CD8-positive, alpha-beta T cell (primary cell): ENCODE measurements at regions of chr21 and their contacts with region 1.

Region 1: DNA sequence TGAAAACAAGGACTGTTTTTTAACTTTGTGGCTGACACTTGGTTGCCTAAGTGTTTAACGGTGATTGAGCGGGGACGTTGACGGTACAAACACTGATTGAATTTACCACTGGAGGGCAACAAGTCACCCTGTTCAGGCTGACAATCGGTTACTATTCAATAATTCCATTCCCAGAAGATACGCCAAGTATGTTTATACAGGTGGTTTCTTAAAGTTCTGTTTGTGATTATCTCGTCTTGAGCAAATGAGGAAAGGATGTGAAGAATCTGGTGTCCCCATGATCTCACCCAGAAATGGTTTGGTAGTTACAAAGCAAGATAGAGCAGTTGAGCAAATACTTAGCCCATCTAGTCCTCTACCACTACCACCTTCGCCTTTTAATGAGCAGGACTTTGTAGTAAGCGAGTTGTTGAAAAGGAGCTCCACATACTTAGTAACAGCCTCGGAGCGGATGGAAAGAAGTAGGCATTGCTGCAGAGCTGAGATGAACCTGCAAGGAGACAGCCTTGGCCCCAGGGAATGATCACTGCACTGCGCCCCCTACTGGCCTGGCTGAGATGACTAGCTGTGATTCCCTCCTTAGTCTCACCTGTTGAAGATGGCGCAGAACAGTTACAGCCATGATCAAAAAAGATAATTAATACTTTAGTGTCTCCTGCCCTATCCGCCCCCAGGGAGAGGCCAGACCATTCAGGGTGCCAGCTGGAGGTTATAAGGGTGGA is 36.3 kb downstream of the IFNAR1 start:
- DNase-seq: peak; percentile 76 to 94 (median 85)
- ATAC-seq: peak; percentile 69
- H3K4me3 ChIP-seq: peak overlapping the region; percentile 50 to 61
- H3K4me3 Mint-ChIP-seq: peak overlapping the region; percentile 84
- H3K27ac ChIP-seq: peak overlapping the region; percentile 61 to 71
- H3K27ac Mint-ChIP-seq: peak overlapping the region; percentile 91
- H3K4me1 ChIP-seq: peaks cover 15% of the 10 kb centered on the region
- H3K4me1 Mint-ChIP-seq: peaks cover 19% of the 10 kb centered on the region
- H3K27me3 ChIP-seq: peaks cover 0 to 3% of the 10 kb centered on the region in 2 experiments
- H3K27me3 Mint-ChIP-seq: no peaks in the 10 kb centered on the region
- CTCF ChIP-seq: peak; percentile 93

Region 2: DNA sequence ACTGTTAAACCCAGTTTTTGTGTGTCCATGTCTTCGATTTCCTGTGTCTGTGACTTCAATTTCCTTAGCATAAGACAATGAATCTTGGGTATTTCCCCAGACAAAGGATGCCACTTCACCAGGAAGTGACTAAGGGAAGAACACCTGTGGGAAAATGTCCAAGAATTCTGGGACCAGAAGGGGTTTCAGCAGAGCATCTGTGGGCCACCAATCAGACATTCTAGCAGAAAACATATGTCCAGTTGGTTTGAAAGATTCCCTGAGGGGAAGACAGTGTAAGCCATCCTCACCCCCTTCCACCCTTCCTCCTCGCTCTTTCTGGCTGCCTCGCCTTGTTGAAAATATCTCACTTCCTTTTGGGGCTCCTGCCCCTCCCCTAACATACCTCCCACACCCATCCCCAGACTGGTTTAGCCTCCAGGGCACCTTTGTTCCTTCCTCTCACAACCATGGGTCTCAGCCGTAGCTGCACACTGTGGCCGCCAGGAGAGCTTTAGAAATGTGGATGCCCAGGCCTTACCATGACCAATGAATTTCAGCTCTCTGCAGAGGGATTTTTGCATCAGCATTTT is 61.8 kb before region 1 on chr21:
- CTCF ChIA-PET with region 1: interaction called, 10 read pairs
- POLR2A ChIA-PET with region 1: interaction called, 11 read pairs
- intact Hi-C with region 1: no loop called
- DNase-seq: peak in 7 of 9 experiments; percentile 9 to 68 (median 31)
- ATAC-seq: peak; percentile 93
- H3K4me3 ChIP-seq: peak overlapping the region in 1 of 2 experiments; percentile 24
- H3K4me3 Mint-ChIP-seq: peak overlapping the region; percentile 72
- H3K27ac ChIP-seq: peak overlapping the region; percentile 4 to 58
- H3K27ac Mint-ChIP-seq: peak overlapping the region; percentile 80
- H3K4me1 ChIP-seq: peaks cover 36% of the 10 kb centered on the region
- H3K4me1 Mint-ChIP-seq: peaks cover 44% of the 10 kb centered on the region
- H3K27me3 ChIP-seq: no peaks in the 10 kb centered on the region
- H3K27me3 Mint-ChIP-seq: no peaks in the 10 kb centered on the region
- CTCF ChIP-seq: peak; percentile 29

Region 3: DNA sequence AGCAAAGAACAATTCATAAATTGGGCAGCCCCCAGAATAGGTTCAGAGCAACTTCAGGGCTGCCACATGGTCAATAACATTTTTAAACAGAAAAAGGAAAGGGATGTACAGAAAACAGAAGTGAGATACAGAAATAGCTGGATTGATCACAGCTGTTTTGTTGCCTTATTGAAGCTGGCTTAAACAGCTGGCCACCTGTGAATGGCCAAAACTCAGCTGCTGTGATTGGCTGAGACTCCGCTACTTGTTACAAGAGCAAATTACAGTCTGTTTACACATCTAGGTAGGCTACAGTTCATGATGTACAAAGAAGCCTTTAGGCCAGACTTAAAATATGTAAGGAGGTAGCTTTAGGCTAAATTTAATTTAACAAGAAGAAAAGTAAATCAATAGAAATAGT is 47.9 kb before region 1 on chr21:
- CTCF ChIA-PET with region 1: no interaction called
- POLR2A ChIA-PET with region 1: no interaction called
- intact Hi-C with region 1: no loop called
- DNase-seq: no peak
- ATAC-seq: no peak
- H3K4me3 ChIP-seq: no peak overlapping the region
- H3K4me3 Mint-ChIP-seq: no peak overlapping the region
- H3K27ac ChIP-seq: no peak overlapping the region
- H3K27ac Mint-ChIP-seq: no peak overlapping the region
- H3K4me1 ChIP-seq: peaks cover 9% of the 10 kb centered on the region
- H3K4me1 Mint-ChIP-seq: peaks cover 10% of the 10 kb centered on the region
- H3K27me3 ChIP-seq: no peaks in the 10 kb centered on the region
- H3K27me3 Mint-ChIP-seq: no peaks in the 10 kb centered on the region
- CTCF ChIP-seq: no peak

Region 4: DNA sequence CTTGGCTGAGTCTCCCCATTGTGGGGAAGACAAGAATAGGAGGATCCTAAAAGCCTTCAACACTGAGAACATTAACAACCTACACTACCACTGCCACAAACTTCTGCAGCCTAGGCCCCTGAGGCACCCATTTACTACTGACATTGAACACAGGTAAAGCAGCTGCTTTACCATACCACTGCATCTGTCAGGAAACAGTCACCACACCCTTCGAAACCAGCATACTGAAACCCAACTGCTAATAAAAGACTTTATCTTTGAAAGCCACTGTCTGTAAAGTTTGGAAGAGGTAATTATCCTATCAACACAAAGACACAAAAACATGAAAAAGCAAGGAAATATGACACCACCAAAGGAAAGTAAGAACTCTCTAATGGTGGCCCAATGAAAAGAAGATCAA is 28.9 kb before region 1 on chr21:
- CTCF ChIA-PET with region 1: interaction called, 15 read pairs
- POLR2A ChIA-PET with region 1: interaction called, 13 read pairs
- intact Hi-C with region 1: no loop called
- DNase-seq: no peak
- ATAC-seq: no peak
- H3K4me3 ChIP-seq: no peak overlapping the region
- H3K4me3 Mint-ChIP-seq: no peak overlapping the region
- H3K27ac ChIP-seq: no peak overlapping the region
- H3K27ac Mint-ChIP-seq: peak overlapping the region; percentile 69
- H3K4me1 ChIP-seq: peaks cover 42% of the 10 kb centered on the region
- H3K4me1 Mint-ChIP-seq: peaks cover 63% of the 10 kb centered on the region
- H3K27me3 ChIP-seq: no peaks in the 10 kb centered on the region
- H3K27me3 Mint-ChIP-seq: no peaks in the 10 kb centered on the region
- CTCF ChIP-seq: no peak

Region 5: GRCh38 chr21:33374450-33375096 is 13.5 kb after region 1 on chr21:
- CTCF ChIA-PET with region 1: interaction called, 22 read pairs
- POLR2A ChIA-PET with region 1: interaction called, 14 read pairs
- intact Hi-C with region 1: no loop called
- DNase-seq: peak in 7 of 9 experiments; percentile 38 to 75 (median 67)
- ATAC-seq: peak; percentile 85
- H3K4me3 ChIP-seq: no peak overlapping the region
- H3K4me3 Mint-ChIP-seq: no peak overlapping the region
- H3K27ac ChIP-seq: no peak overlapping the region
- H3K27ac Mint-ChIP-seq: no peak overlapping the region
- H3K4me1 ChIP-seq: peaks cover 9% of the 10 kb centered on the region
- H3K4me1 Mint-ChIP-seq: peaks cover 12% of the 10 kb centered on the region
- H3K27me3 ChIP-seq: peaks cover 0 to 13% of the 10 kb centered on the region in 2 experiments
- H3K27me3 Mint-ChIP-seq: peaks cover 3% of the 10 kb centered on the region
- CTCF ChIP-seq: peak; percentile 66

Region 6: GRCh38 chr21:33386222-33386784 is 25.3 kb after region 1 on chr21:
- CTCF ChIA-PET with region 1: interaction called, 16 read pairs
- POLR2A ChIA-PET with region 1: interaction called, 17 read pairs
- intact Hi-C with region 1: loop called (anchors 1 to 2 kb)
- DNase-seq: peak in 1 of 9 experiments; percentile 19
- ATAC-seq: no peak
- H3K4me3 ChIP-seq: no peak overlapping the region
- H3K4me3 Mint-ChIP-seq: no peak overlapping the region
- H3K27ac ChIP-seq: no peak overlapping the region
- H3K27ac Mint-ChIP-seq: no peak overlapping the region
- H3K4me1 ChIP-seq: peaks cover 42% of the 10 kb centered on the region
- H3K4me1 Mint-ChIP-seq: peaks cover 46% of the 10 kb centered on the region
- H3K27me3 ChIP-seq: peaks cover 0 to 33% of the 10 kb centered on the region in 2 experiments
- H3K27me3 Mint-ChIP-seq: peaks cover 3% of the 10 kb centered on the region
- CTCF ChIP-seq: no peak

Region 7: GRCh38 chr21:33441489-33442477 is 80.7 kb after region 1 on chr21:
- CTCF ChIA-PET with region 1: interaction called, 31 read pairs
- POLR2A ChIA-PET with region 1: interaction called, 7 read pairs
- intact Hi-C with region 1: loop called (anchors 1 kb)
- DNase-seq: peak in 1 of 9 experiments; percentile 9
- ATAC-seq: no peak
- H3K4me3 ChIP-seq: no peak overlapping the region
- H3K4me3 Mint-ChIP-seq: no peak overlapping the region
- H3K27ac ChIP-seq: no peak overlapping the region
- H3K27ac Mint-ChIP-seq: peak overlapping the region; percentile 60
- H3K4me1 ChIP-seq: no peaks in the 10 kb centered on the region
- H3K4me1 Mint-ChIP-seq: peaks cover 3% of the 10 kb centered on the region
- H3K27me3 ChIP-seq: no peaks in the 10 kb centered on the region
- H3K27me3 Mint-ChIP-seq: no peaks in the 10 kb centered on the region
- CTCF ChIP-seq: no peak

Region 8: DNA sequence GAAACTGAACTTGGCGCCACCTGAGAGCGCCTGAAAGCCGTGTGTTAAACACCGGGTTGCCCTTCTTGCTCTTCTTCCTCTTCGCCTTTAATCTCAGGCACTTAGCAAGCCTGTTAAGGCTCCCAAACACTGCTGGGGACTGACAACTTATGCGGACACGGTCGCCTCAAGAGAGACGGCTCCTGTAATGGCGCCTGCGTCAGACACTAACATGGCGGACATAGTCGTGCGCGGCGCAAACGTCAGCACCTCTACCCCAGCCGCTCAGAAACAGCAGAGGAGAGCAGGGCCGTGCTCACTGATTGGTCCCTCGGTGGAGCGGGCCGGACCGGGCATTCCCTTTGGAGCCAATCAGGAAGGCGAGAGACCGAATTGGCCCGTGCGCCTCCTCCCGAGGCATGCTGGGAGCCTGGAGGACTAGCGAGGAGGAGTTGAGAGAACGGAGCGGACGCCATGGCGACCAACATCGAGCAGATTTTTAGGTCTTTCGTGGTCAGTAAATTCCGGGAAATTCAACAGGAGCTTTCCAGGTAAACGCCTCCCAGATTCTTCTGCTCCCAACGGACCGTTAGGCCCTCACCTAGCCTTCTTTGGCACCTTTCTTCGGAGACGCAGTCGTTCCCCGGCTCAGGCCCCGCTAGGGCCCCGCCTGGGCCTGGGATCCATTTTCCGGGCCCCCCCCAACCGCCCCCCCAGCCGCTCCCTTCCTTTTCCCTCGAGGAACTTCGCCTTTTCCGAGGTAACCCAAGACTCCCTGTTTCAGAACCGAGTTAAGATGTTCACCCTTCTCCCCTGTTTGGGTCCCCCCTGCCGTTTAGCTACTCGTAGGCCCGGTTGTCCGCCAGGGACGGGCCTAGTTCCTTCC is 181.8 kb after region 1 on chr21 and contains the start of gene SON:
- CTCF ChIA-PET with region 1: interaction called, 3 read pairs
- POLR2A ChIA-PET with region 1: interaction called, 3 read pairs
- intact Hi-C with region 1: loop called in 1 of 2 experiments (anchors 5 kb)
- DNase-seq: peak; percentile 93 to 99 (median 96)
- ATAC-seq: peak; percentile 89
- H3K4me3 ChIP-seq: peak within 1 kb of the TSS; percentile 87 to 88
- H3K4me3 Mint-ChIP-seq: peak within 1 kb of the TSS; percentile 96
- H3K27ac ChIP-seq: peak within 1 kb of the TSS; percentile 99
- H3K27ac Mint-ChIP-seq: peak within 1 kb of the TSS; percentile 99
- H3K4me1 ChIP-seq: peaks cover 44% of the 10 kb centered on the region
- H3K4me1 Mint-ChIP-seq: peaks cover 55% of the 10 kb centered on the region
- H3K27me3 ChIP-seq: no peaks in the 10 kb centered on the region
- H3K27me3 Mint-ChIP-seq: no peaks in the 10 kb centered on the region
- CTCF ChIP-seq: no peak
- total RNA-seq, gene SON: 418 to 422 TPM